ENCODE measurements at regions of chr12 and their contacts with region 1.

Region 1: DNA sequence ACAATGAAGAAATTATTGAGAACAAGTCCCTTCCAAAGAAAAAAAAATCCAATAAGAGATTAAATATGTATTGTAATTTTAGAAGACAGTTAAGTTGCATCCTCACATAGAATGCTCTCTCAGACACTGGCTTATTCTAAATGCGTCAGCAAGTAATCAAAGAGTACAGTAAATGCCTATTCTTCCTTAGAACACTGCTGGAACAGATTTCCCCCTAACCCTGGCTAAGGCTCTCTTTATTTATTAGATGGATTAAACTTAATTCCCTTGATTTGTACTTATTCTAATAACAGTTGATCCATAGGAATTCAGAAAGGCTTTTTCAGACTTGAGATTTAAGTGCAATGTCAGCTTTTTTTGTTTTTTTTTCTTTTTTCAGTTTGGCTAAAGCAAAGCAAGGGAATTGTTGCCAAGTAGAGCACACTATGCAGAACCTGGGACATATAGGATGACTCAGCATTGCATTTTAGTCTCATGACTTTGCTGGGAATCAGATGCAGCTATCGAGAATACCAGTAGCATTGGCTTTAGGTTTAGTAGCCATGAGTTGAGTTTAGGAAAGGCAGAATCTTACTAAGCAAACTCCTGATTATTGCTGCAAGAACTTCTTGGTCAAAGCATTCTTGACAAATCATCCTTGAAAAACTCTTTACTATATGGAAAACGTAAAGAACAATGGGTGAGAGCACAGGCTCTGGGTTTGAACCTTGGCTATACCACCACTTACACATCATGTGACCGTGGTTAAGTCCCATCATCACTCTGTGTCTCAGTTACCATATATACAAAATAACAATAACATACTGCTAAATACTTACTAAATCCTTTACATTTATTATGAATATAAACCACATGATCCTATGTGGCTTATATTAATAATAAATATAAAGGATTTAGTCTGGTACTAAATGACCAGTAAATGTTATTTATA is 26.7 kb downstream of the MED21 start:
- DNase-seq: peak; percentile 25
- ATAC-seq: peak; percentile 73; the same call in 1 of the 2 replicates
- H3K4me3 ChIP-seq: no peak overlapping the region
- H3K27ac ChIP-seq: no peak overlapping the region
- H3K4me1 ChIP-seq: no peaks in the 10 kb centered on the region
- H3K27me3 ChIP-seq: no peaks in the 10 kb centered on the region
- CTCF ChIP-seq: no peak

Region 2: DNA sequence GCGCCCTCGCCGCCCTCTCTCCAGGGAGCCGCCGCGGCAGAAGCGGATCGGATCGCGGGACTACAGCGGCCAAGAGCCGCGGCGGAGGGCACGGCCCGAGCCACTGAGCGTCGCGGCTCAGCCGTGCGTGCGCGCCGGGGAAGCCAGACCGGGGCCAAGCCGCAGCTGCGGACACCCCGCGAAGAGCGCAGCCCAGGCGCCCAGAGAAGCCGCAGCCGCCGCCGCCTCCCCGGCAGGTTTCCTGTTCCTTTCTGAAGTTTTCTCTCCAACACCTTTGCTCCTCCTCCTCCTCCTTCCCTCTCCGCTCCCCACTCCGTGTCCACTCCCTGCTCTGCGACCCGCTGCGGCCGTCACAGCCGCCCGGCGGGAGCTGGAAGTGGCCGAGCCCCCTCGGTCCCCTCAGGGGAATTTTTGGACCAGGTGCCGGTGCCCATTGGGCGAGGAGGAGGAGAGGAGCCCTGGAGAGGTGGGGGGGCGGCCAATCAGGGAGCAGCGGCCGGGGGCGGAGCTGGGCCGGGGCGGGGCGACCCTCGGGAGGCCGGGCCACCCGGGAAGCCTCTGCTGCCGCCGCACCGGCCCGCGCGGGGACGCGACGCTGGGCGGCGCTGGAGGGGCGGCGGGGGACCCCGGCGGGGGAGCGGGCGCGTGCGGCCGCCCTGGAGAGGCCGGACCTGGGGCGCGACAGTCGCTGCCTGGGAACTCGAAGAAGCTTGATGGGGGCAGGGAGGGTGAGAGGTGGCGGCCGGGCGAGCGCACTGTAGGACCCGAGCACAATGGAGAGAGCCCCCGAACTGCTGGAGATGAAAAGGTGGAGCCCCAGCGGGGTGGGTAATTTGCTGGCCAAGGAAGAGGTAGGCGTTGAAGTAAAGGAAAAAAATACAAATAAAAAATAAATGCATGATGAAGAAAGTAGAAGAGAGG is 216.0 kb before region 1 on chr12 and contains the start of gene ITPR2:
- CTCF ChIA-PET with region 1: no interaction called
- POLR2A ChIA-PET with region 1: no interaction called
- in situ Hi-C with region 1: no loop called
- intact Hi-C with region 1: no loop called
- DNase-seq: no peak
- ATAC-seq: peak; percentile 95
- H3K4me3 ChIP-seq: peak within 1 kb of the TSS; percentile 92 to 96
- H3K27ac ChIP-seq: peak within 1 kb of the TSS; percentile 94
- H3K4me1 ChIP-seq: peaks cover 25% of the 10 kb centered on the region
- H3K27me3 ChIP-seq: no peaks in the 10 kb centered on the region
- CTCF ChIP-seq: peak; percentile 95
- total RNA-seq, gene ITPR2: 41.8 TPM

Region 3: DNA sequence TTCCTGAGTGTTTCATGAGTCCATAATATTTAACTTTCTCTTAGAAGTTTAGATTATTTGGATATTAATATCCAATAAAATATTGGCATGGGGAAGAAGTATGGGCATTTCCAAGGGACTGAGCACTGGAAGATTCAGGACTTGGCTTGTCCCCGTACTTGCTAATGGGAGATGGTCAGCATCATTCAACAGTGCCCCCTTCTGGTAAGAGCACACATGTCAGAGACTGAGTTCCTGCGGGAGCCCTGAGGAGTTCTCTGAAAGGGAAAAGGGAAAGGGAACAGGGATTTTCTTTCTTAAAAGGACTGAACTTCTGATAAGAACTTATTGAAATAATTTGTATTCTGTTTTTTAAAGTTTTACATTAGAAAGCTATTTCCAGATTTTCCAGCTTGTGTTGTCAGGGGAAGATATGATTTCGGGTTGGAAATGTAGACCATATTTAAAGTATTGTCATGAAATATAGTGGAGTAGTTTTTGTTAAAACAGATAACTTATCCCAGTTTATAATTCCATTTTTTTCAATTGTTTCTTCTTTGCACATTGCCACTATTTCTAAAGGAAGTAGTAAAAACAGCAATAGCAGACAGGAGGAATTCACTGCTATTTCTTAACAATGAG is 93.1 kb after region 1 on chr12:
- CTCF ChIA-PET with region 1: no interaction called
- POLR2A ChIA-PET with region 1: no interaction called
- in situ Hi-C with region 1: no loop called
- intact Hi-C with region 1: loop called (anchors 5 kb)
- DNase-seq: peak; percentile 81
- ATAC-seq: peak; percentile 100
- H3K4me3 ChIP-seq: no peak overlapping the region
- H3K27ac ChIP-seq: no peak overlapping the region
- H3K4me1 ChIP-seq: no peaks in the 10 kb centered on the region
- H3K27me3 ChIP-seq: no peaks in the 10 kb centered on the region
- CTCF ChIP-seq: peak; percentile 96